ENCODE measurements at regions of chr17 and their contacts with region 1.

Region 1: DNA sequence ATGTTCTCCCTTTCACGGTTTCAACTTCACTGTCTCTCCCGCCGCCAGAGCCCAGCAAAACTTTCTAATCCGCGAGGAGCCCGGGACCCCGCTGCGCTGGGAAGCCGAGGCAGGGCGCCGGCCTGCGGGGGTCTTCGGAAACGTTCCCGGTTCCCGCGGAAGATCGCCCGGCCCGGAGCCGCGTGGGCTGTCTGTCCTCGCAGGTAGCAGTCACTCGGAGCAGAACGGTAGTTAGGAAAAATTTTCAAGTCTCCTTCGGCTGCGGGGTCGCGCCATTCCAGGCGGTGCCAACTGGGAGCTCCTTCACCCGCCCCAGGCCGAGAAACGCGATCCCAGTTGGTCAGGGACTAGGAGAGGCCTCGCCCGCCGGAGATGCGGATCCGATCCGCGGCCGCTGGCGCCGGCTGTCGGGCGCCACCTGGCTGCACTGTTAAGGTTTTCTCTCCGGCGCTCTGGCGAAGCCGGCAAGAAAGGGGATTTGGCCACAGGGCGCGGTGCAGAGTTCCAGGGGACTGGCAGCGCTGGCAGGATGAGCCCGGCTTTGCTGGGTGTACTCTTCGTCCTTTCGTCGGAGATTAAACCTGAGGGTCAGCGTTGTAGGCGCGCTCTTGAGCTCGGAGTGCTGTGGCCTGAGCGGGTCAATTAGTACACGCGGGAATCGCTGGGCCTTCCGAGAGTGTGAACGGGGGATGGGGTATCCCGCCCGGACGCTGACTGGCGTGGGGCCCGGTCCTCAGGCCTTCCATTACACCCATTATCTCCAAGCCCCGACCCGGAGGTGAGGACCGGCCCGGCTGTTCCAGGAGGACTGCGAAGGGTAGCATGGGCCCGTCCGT is 135.4 kb downstream of the KCNJ12 start:
- DNase-seq: peak; percentile 38
- ATAC-seq: peak; percentile 97
- H3K4me3 ChIP-seq: peak overlapping the region; percentile 47 to 50
- H3K27ac ChIP-seq: peak overlapping the region; percentile 39; the same call in 1 of the 2 replicates
- H3K4me1 ChIP-seq: no peaks in the 10 kb centered on the region
- H3K27me3 ChIP-seq: no peaks in the 10 kb centered on the region
- CTCF ChIP-seq: peak; percentile 92

Region 2: GRCh38 chr17:21284319-21285163 is 227.0 kb before region 1 on chr17 and contains the start of gene MAP2K3:
- CTCF ChIA-PET with region 1: no interaction called
- POLR2A ChIA-PET with region 1: no interaction called
- in situ Hi-C with region 1: no loop called
- intact Hi-C with region 1: loop called (anchors 2 kb)
- DNase-seq: peak; percentile 85
- ATAC-seq: peak; percentile 83
- H3K4me3 ChIP-seq: peak within 1 kb of the TSS; percentile 65 to 75
- H3K27ac ChIP-seq: peak within 1 kb of the TSS; percentile 90
- H3K4me1 ChIP-seq: peaks cover 37% of the 10 kb centered on the region
- H3K27me3 ChIP-seq: no peaks in the 10 kb centered on the region
- CTCF ChIP-seq: no peak
- total RNA-seq, gene MAP2K3: 44.4 TPM

Region 3: DNA sequence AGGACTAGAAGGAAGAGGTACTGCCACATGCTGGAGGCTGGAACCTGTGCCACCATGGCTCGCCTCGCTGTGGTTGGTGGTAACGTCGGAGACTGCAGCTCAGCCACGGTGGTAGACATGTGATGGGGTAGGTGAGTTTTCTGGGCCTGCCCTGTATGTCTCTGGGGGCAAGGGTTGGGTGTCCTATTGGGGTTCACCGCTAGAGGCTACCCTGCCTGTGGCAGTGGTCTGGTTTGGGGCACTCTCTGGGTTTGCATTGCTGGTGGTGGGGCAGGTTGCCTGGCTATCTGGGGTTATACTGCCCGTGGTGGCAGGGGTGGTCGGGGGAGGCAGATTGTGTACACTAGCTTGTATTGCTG is 101.5 kb after region 1 on chr17:
- CTCF ChIA-PET with region 1: no interaction called
- POLR2A ChIA-PET with region 1: no interaction called
- in situ Hi-C with region 1: no loop called
- intact Hi-C with region 1: no loop called
- DNase-seq: no peak
- ATAC-seq: no peak
- H3K4me3 ChIP-seq: no peak overlapping the region
- H3K27ac ChIP-seq: no peak overlapping the region
- H3K4me1 ChIP-seq: no peaks in the 10 kb centered on the region
- H3K27me3 ChIP-seq: no peaks in the 10 kb centered on the region
- CTCF ChIP-seq: no peak

Measured in Panc1 (cell line).